PC-9 (cell line): ENCODE measurements at regions of chrX and their contacts with region 1.

Region 1: GRCh38 chrX:129772796-129773431 is 6.8 kb upstream of the SASH3 start:
- DNase-seq: no peak
- H3K4me3 ChIP-seq: no peak overlapping the region
- H3K27ac ChIP-seq: no peak overlapping the region
- H3K4me1 ChIP-seq: no peaks in the 10 kb centered on the region
- H3K27me3 ChIP-seq: no peaks in the 10 kb centered on the region
- CTCF ChIP-seq: no peak

Region 2: DNA sequence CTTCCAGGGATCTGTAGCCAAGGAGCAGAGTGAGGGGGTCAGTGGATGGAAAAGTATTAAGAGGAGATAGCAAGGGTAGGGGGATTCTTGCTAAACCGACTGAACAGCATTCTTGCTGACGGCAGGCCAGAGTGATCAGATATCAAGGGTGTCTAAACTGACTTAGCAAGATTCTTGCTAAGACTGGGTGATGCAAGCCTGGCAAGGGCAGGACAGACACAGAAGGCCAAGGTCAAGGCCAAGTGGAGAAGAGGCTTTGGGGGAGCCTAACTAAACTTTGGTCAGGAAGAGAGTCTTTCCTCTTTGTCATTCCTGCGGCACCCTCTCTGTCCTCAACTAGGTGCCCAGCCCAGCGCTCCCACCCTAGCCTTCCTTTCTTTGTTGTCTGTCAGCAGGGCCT is 33.3 kb before region 1 on chrX:
- CTCF ChIA-PET with region 1: interaction called, 12 read pairs
- POLR2A ChIA-PET with region 1: interaction called, 6 read pairs
- intact Hi-C with region 1: no loop called
- DNase-seq: peak in 1 of 2 experiments; percentile 25
- H3K4me3 ChIP-seq: no peak overlapping the region
- H3K27ac ChIP-seq: no peak overlapping the region
- H3K4me1 ChIP-seq: peaks cover 17% of the 10 kb centered on the region
- H3K27me3 ChIP-seq: peaks cover 5% of the 10 kb centered on the region; the same call in 1 of the 2 replicates
- CTCF ChIP-seq: no peak

Region 3: DNA sequence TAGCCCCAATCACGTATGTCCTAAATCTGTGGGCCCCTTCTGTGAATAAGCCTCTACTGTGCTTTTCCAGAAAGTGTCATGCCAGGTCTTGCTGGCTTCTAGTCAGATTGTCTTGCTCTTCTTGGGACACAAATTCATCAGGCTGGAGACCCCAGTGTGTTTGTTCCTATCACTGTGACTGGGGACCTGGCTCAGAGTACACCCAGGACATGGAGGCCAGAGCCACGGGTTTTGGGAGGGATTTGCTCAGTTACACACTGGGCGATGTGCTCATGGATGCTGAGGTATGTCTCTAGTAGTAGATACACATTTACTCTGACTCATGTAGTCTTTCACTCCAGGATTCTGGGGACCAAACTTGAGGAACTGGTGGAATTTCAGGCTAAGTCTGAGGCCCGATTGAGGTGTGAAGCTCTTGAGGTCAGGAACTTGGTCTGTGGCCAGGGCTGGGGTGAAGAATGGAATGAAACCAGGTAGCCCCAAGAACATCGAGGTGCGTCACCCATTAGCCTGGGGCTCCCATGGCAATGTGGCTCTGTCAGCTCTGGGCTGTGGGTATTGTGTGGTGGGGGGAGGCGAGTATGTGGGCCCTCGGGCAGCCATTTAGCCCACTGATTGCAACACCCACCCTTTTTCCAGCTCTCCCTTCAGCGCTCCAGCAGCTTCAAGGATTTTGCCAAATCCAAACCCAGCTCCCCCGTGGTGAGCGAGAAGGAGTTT is 14.6 kb after region 1 on chrX:
- CTCF ChIA-PET with region 1: interaction called, 11 read pairs
- POLR2A ChIA-PET with region 1: no interaction called
- intact Hi-C with region 1: no loop called
- DNase-seq: peak in 1 of 2 experiments; percentile 60
- H3K4me3 ChIP-seq: no peak overlapping the region
- H3K27ac ChIP-seq: no peak overlapping the region
- H3K4me1 ChIP-seq: no peaks in the 10 kb centered on the region
- H3K27me3 ChIP-seq: no peaks in the 10 kb centered on the region
- CTCF ChIP-seq: no peak